ENCODE measurements at regions of chr4 and their contacts with region 1.

Region 1: GRCh38 chr4:63618883-63619718 is 790.1 kb downstream of the TECRL start:
- DNase-seq: no peak
- ATAC-seq: no peak
- H3K4me3 ChIP-seq: no peak overlapping the region
- H3K27ac ChIP-seq: no peak overlapping the region
- H3K4me1 ChIP-seq: no peaks in the 10 kb centered on the region
- H3K27me3 ChIP-seq: no peaks in the 10 kb centered on the region
- CTCF ChIP-seq: no peak
- EP300 ChIP-seq: no peak
- POLR2A ChIP-seq: no peak
- RAD21 ChIP-seq: no peak

Region 2: DNA sequence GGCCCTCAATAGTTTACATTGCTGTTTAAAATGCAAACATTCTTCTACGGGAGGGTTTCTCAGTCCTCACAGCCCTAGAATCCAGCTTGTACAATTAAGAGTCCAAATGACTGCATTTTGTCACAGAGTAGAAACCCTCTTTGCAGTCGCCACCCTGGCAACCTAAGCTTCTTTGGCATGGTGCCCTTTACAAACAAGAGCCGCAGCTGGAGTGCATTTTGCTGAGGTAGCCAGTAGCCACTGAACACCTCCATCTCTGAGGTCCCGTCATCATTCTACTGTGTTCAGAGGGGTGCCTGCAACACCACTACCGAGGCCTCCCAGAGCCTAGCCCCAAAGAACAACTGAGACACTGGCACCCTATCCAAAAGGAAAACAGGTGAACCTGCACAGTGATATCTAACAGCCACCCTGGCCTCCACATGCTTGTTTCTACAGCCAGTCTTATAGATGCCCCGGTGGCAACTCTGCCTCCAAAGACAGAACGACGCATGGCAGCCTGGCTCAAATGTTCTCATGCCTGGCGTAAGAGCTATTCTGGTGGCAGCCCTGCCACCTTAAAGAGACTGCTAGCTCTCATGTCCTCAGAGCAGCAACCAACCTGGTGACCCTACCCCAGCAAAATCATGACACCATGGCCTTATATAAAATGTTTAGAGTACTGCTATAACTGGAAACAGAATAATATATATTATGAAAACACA is 11.8 kb before region 1 on chr4:
- CTCF ChIA-PET with region 1: no interaction called
- POLR2A ChIA-PET with region 1: no interaction called
- in situ Hi-C with region 1: no loop called
- intact Hi-C with region 1: loop called (anchors 1 kb)
- DNase-seq: no peak
- ATAC-seq: no peak
- H3K4me3 ChIP-seq: no peak overlapping the region
- H3K27ac ChIP-seq: no peak overlapping the region
- H3K4me1 ChIP-seq: no peaks in the 10 kb centered on the region
- H3K27me3 ChIP-seq: no peaks in the 10 kb centered on the region
- CTCF ChIP-seq: no peak
- EP300 ChIP-seq: no peak
- POLR2A ChIP-seq: no peak
- RAD21 ChIP-seq: no peak

Region 3: GRCh38 chr4:64384237-64385203 is 765.4 kb after region 1 on chr4:
- CTCF ChIA-PET with region 1: no interaction called
- POLR2A ChIA-PET with region 1: no interaction called
- in situ Hi-C with region 1: no loop called
- intact Hi-C with region 1: no loop called
- DNase-seq: no peak
- ATAC-seq: no peak
- H3K4me3 ChIP-seq: no peak overlapping the region
- H3K27ac ChIP-seq: no peak overlapping the region
- H3K4me1 ChIP-seq: no peaks in the 10 kb centered on the region
- H3K27me3 ChIP-seq: no peaks in the 10 kb centered on the region
- CTCF ChIP-seq: no peak
- EP300 ChIP-seq: no peak
- POLR2A ChIP-seq: no peak
- RAD21 ChIP-seq: no peak